ENCODE measurements at regions of chr6 and their contacts with region 1.

Region 1: GRCh38 chr6:144284783-144285547 is at the start of gene UTRN:
- DNase-seq: peak; percentile 93
- ATAC-seq: peak; percentile 85
- H3K4me3 ChIP-seq: peak within 1 kb of the TSS; percentile 92
- H3K27ac ChIP-seq: peak within 1 kb of the TSS; percentile 86
- H3K4me1 ChIP-seq: peaks cover 20% of the 10 kb centered on the region
- H3K27me3 ChIP-seq: no peaks in the 10 kb centered on the region
- CTCF ChIP-seq: no peak
- total RNA-seq, gene UTRN: 316 TPM

Region 2: DNA sequence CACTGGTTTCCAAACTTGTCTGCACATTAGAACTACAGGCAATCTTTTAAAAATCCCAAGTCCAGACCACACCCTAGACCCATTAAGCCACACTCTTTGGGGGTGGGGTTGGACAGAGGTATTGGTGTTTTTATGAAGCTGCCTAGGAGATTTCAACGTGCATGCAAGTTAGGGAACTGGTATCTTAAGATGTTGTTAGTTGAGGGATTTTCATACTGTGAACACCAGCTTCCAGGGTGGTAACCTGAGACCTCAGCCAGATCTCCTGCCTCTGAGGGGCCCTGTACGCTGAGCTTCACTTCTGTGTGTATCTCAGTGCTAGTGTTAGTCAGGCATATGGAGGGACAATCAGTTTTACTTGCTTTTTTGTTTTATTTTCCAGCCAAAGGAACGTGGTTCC is 138.2 kb after region 1 on chr6:
- intact Hi-C with region 1: loop called (anchors 10 kb)
- DNase-seq: no peak
- ATAC-seq: no peak
- H3K4me3 ChIP-seq: no peak overlapping the region
- H3K27ac ChIP-seq: no peak overlapping the region
- H3K4me1 ChIP-seq: no peaks in the 10 kb centered on the region
- H3K27me3 ChIP-seq: no peaks in the 10 kb centered on the region
- CTCF ChIP-seq: no peak